PC-3 (cell line): ENCODE measurements at regions of chr6 and their contacts with region 1.

Region 1: DNA sequence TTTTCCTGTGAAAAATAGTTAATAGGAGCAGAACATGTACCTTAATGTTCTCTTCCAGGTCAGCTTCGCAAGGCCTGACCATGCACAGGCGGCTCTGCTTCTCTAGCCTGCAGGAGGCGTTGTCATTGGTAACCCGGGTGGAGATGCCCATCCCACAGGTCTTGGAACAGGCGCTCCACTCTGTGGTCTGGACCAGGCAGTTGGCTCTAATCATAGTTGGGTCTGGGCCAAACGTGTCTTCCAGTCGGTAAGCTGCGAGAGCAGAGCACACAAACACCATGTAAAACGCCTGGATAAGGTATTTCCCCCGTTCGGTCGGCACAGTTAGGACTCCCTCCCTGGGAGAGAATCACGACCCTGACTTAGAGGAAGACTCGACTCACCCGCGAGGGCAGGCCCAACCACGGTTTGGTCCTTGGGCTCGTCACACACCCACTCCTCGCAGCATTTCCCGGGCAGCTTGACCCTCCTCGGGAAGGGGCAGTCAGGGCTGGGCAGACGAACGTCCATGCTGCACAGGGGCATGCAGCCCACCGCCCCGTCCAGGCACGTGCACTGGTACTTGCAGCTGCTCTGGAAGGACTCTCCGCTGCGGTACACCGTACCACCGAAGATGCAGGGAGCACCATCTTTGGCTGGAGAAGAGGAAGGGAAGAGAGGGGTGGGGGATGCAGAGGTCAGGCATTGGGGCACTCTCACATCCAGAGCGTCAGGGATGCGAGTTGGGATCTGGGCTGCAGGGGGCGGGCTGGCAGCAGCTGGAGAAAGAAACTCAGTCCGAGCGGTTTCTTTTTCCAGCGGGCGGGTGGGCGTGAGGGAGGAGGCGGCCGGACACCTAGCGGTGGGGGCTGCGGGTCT is 1.0 kb downstream of the CCN2 start:
- DNase-seq: peak; percentile 76
- ATAC-seq: peak; percentile 49
- H3K4me3 ChIP-seq: peak overlapping the region; percentile 86
- H3K27ac ChIP-seq: no peak overlapping the region
- H3K4me1 ChIP-seq: peaks cover 39% of the 10 kb centered on the region
- H3K27me3 ChIP-seq: no peaks in the 10 kb centered on the region
- CTCF ChIP-seq: peak; percentile 42

Region 2: DNA sequence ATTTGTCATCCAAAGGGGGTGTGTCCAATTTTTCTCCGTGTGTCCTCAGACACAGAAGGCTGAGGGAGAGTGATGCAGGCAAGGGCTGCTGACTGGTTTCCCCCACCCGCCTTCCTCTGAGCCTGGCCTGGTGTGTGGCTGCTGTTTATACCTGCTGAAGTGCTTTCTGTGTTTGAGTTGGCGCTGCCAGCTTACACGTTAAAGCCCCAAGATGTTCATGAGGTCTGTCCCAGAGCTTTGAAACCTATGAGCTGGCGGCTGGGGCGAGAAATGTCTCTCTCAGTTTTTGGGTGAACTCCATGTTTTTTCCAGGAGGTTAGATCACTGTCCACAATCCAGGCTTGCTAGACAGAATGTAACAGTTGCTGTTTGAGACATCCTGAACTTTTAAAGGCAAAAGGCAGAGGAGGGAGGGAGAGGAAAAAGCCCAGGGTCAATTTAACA is 70.0 kb after region 1 on chr6:
- CTCF ChIA-PET with region 1: no interaction called
- POLR2A ChIA-PET with region 1: interaction called, 4 read pairs
- intact Hi-C with region 1: loop called (anchors 1 kb)
- DNase-seq: no peak
- ATAC-seq: peak; percentile 31; the same call in 1 of the 2 replicates
- H3K4me3 ChIP-seq: no peak overlapping the region
- H3K27ac ChIP-seq: no peak overlapping the region
- H3K4me1 ChIP-seq: peaks cover 6% of the 10 kb centered on the region
- H3K27me3 ChIP-seq: no peaks in the 10 kb centered on the region
- CTCF ChIP-seq: no peak

Region 3: GRCh38 chr6:132131758-132132157 is 181.6 kb after region 1 on chr6:
- CTCF ChIA-PET with region 1: no interaction called
- POLR2A ChIA-PET with region 1: interaction called, 12 read pairs
- intact Hi-C with region 1: no loop called
- DNase-seq: peak; percentile 90
- ATAC-seq: peak; percentile 93
- H3K4me3 ChIP-seq: no peak overlapping the region
- H3K27ac ChIP-seq: peak overlapping the region; percentile 68
- H3K4me1 ChIP-seq: peaks cover 22% of the 10 kb centered on the region
- H3K27me3 ChIP-seq: no peaks in the 10 kb centered on the region
- CTCF ChIP-seq: no peak

Region 4: GRCh38 chr6:132161283-132161682 is 211.1 kb after region 1 on chr6:
- CTCF ChIA-PET with region 1: interaction called, 3 read pairs
- POLR2A ChIA-PET with region 1: no interaction called
- intact Hi-C with region 1: loop called (anchors 1 kb)
- DNase-seq: peak; percentile 62
- ATAC-seq: peak; percentile 58
- H3K4me3 ChIP-seq: no peak overlapping the region
- H3K27ac ChIP-seq: no peak overlapping the region
- H3K4me1 ChIP-seq: no peaks in the 10 kb centered on the region
- H3K27me3 ChIP-seq: no peaks in the 10 kb centered on the region
- CTCF ChIP-seq: peak; percentile 72

Region 5: DNA sequence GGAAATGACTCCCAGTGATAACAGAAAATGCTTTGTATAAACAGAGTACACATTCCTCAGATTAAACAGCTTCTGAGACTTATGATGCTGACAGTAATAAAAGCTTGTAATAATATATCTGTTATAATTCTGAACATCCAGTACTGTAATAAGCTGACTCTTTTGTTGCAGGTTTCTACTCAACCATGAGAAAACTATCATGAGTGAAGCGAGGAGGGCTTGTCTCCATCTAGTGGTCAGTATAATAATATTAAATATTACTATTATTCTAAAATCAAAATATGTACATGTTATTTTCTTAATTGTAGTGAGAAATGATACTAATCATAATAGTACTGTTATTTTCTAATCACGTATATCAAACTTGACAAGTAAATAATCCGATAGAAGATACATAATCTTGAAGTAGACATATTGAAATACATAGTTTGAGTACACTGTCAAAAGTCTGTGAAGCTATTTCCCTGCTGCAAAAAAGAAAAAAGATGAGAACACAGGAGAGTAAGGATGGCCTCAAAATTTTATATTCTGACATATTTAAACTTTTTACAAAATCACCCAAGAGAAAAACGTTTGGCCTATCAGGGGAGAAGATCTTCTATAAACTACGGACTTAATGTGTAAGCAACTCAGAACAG is 268.0 kb after region 1 on chr6:
- CTCF ChIA-PET with region 1: no interaction called
- POLR2A ChIA-PET with region 1: interaction called, 3 read pairs
- intact Hi-C with region 1: loop called (anchors 5 kb)
- DNase-seq: peak; percentile 42
- ATAC-seq: no peak; the same call in 1 of the 2 replicates
- H3K4me3 ChIP-seq: no peak overlapping the region
- H3K27ac ChIP-seq: no peak overlapping the region
- H3K4me1 ChIP-seq: no peaks in the 10 kb centered on the region
- H3K27me3 ChIP-seq: no peaks in the 10 kb centered on the region
- CTCF ChIP-seq: peak; percentile 36